ENCODE measurements at regions of chr12 and their contacts with region 1.

Region 1: GRCh38 chr12:92021665-92022033 is 124.0 kb downstream of the BTG1 start:
- DNase-seq: no peak
- ATAC-seq: no peak
- H3K4me3 ChIP-seq: no peak overlapping the region
- H3K4me3 Mint-ChIP-seq: peak overlapping the region in 7 of 10 donors; percentile 30 to 70 (median 41)
- H3K27ac ChIP-seq: no peak overlapping the region
- H3K27ac Mint-ChIP-seq: peak overlapping the region in 6 of 9 donors; percentile 53 to 86 (median 80)
- H3K4me1 ChIP-seq: peaks cover 0 to 20% of the 10 kb centered on the region in 2 donors
- H3K4me1 Mint-ChIP-seq: peaks cover 20 to 76% (median 62%) of the 10 kb centered on the region in 7 donors
- H3K27me3 ChIP-seq: no peaks in the 10 kb centered on the region
- H3K27me3 Mint-ChIP-seq: no peaks in the 10 kb centered on the region

Region 2: GRCh38 chr12:92010853-92011701 is 10.6 kb before region 1 on chr12:
- CTCF ChIA-PET with region 1: interaction called, 8 read pairs
- POLR2A ChIA-PET with region 1: interaction called, 6 read pairs
- intact Hi-C with region 1: loop called in 1 of 2 experiments (anchors 1 kb)
- DNase-seq: peak in 4 of 9 donors; percentile 21 to 37 (median 32)
- ATAC-seq: peak; percentile 37
- H3K4me3 ChIP-seq: peak overlapping the region; percentile 22
- H3K4me3 Mint-ChIP-seq: peak overlapping the region; percentile 32 to 90 (median 84)
- H3K27ac ChIP-seq: peak overlapping the region; percentile 69
- H3K27ac Mint-ChIP-seq: peak overlapping the region; percentile 63 to 98 (median 95)
- H3K4me1 ChIP-seq: peaks cover 11 to 36% of the 10 kb centered on the region in 2 donors
- H3K4me1 Mint-ChIP-seq: peaks cover 19 to 79% (median 69%) of the 10 kb centered on the region in 7 donors
- H3K27me3 ChIP-seq: no peaks in the 10 kb centered on the region
- H3K27me3 Mint-ChIP-seq: no peaks in the 10 kb centered on the region